Sigmoid colon (tissue), 7 donors: ENCODE measurements at regions of chr9 and their contacts with region 1.

Region 1: GRCh38 chr9:133485361-133486260 is 6.7 kb upstream of the SLC2A6 start:
- DNase-seq: no peak
- H3K4me3 ChIP-seq: no peak overlapping the region
- H3K27ac ChIP-seq: no peak overlapping the region
- H3K4me1 ChIP-seq: no peaks in the 10 kb centered on the region
- H3K27me3 ChIP-seq: peaks cover 0 to 16% (median 0%) of the 10 kb centered on the region in 3 donors
- CTCF ChIP-seq: no peak
- EP300 ChIP-seq: no peak
- POLR2A ChIP-seq: no peak

Region 2: DNA sequence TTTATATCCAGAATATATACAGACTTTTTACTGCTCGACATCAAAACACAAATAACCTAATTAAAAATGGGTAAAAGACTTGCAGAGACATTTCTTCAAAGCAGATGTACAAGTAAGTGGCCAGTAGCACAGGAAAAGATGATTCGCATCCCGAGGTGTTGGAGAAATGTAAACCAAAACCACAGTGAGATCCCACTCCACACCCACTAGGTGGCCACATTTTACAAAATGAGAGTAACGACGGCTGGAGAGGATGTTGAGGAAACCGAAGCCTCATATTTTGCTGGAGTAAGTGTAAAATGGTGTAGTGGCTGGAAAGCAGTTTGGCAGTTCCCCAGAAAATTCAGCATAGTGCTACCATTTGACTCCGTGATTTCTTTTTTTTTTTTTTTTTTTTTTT is 300.6 kb before region 1 on chr9:
- intact Hi-C with region 1: loop called (anchors 1 kb)
- DNase-seq: peak; percentile 69
- H3K4me3 ChIP-seq: no peak overlapping the region
- H3K27ac ChIP-seq: no peak overlapping the region
- H3K4me1 ChIP-seq: peaks cover 0 to 5% (median 2%) of the 10 kb centered on the region in 4 donors
- H3K27me3 ChIP-seq: peaks cover 0 to 26% (median 0%) of the 10 kb centered on the region in 3 donors
- CTCF ChIP-seq: peak in 3 of 4 experiments; percentile 44 to 56 (median 46)
- EP300 ChIP-seq: no peak
- POLR2A ChIP-seq: no peak

Region 3: GRCh38 chr9:133252301-133252780 is 233.3 kb before region 1 on chr9:
- intact Hi-C with region 1: no loop called
- DNase-seq: no peak
- H3K4me3 ChIP-seq: no peak overlapping the region
- H3K27ac ChIP-seq: peak overlapping the region in 1 of 4 donors; percentile 32
- H3K4me1 ChIP-seq: no peaks in the 10 kb centered on the region
- H3K27me3 ChIP-seq: peaks cover 0 to 3% (median 0%) of the 10 kb centered on the region in 3 donors
- CTCF ChIP-seq: no peak
- EP300 ChIP-seq: no peak
- POLR2A ChIP-seq: peak in 1 of 2 donors; percentile 22

Region 4: GRCh38 chr9:133406480-133407307 is 78.9 kb before region 1 on chr9:
- intact Hi-C with region 1: loop called (anchors 1 kb)
- DNase-seq: peak; percentile 85
- H3K4me3 ChIP-seq: no peak overlapping the region
- H3K27ac ChIP-seq: no peak overlapping the region
- H3K4me1 ChIP-seq: no peaks in the 10 kb centered on the region
- H3K27me3 ChIP-seq: no peaks in the 10 kb centered on the region
- CTCF ChIP-seq: peak; percentile 82 to 92 (median 89)
- EP300 ChIP-seq: no peak
- POLR2A ChIP-seq: no peak

Region 5: GRCh38 chr9:133609311-133610098 is 123.9 kb after region 1 on chr9 and contains the start of gene FAM163B:
- intact Hi-C with region 1: no loop called
- DNase-seq: no peak
- H3K4me3 ChIP-seq: peak within 1 kb of the TSS in 1 of 4 donors; percentile 15
- H3K27ac ChIP-seq: no peak within 1 kb of the TSS
- H3K4me1 ChIP-seq: peaks cover 0 to 4% (median 2%) of the 10 kb centered on the region in 4 donors
- H3K27me3 ChIP-seq: peaks cover 13 to 92% (median 78%) of the 10 kb centered on the region in 3 donors
- CTCF ChIP-seq: no peak
- EP300 ChIP-seq: no peak
- POLR2A ChIP-seq: no peak
- total RNA-seq, gene FAM163B: 0.83 to 1.5 (median 1.1) TPM in 3 of 4 donors, not detected in the other